ENCODE measurements at regions of chr9 and their contacts with region 1.

Region 1: DNA sequence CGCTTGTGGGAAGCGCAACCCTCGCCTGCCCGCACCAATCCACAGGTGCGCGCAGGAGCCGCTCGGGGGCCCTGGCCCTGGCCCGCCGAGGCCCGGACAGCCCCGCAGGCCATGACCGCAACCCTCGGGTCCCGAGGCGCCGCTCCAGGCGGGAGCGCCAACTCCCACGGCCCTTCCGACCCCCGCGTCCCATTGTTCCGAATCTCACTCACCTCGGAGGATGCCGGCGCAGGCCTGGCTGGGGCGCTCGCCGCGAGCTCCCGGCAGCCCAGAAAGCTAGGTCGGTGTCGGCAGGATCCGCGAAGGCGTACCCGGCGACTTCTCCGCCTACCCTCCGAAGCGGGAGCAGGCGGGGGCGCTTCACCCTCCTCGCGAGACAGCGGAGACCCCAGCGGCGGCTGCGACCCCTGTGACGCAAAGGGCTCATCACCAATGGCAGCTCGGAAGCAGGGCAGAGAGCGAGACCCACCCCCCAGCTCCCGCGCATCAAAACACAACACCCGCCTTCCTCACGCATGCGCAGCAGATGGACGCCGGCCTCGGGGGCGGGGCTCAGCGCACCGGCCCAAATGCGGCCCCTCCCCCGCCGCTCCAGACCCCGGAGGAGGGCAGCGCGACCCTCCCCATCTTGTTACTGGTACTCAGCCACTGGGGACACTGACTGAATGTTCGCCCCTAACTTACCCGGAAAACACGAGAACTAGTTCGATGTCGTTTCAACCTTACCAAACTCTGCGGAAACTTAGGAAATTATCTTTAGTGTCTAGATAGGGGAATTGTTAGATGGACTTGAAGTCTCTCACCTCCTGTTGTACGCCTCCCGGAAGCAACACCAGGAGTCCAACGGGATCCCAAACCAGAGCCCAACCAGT is 1.3 kb upstream of the SMIM27 start:
- DNase-seq: peak; percentile 45
- H3K4me3 ChIP-seq: peak overlapping the region; percentile 82
- CTCF ChIP-seq: peak; percentile 4

Region 2: GRCh38 chr9:32360983-32361673 is 189.7 kb before region 1 on chr9:
- CTCF ChIA-PET with region 1: no interaction called
- POLR2A ChIA-PET with region 1: no interaction called
- DNase-seq: no peak
- H3K4me3 ChIP-seq: no peak overlapping the region
- CTCF ChIP-seq: no peak

Region 3: DNA sequence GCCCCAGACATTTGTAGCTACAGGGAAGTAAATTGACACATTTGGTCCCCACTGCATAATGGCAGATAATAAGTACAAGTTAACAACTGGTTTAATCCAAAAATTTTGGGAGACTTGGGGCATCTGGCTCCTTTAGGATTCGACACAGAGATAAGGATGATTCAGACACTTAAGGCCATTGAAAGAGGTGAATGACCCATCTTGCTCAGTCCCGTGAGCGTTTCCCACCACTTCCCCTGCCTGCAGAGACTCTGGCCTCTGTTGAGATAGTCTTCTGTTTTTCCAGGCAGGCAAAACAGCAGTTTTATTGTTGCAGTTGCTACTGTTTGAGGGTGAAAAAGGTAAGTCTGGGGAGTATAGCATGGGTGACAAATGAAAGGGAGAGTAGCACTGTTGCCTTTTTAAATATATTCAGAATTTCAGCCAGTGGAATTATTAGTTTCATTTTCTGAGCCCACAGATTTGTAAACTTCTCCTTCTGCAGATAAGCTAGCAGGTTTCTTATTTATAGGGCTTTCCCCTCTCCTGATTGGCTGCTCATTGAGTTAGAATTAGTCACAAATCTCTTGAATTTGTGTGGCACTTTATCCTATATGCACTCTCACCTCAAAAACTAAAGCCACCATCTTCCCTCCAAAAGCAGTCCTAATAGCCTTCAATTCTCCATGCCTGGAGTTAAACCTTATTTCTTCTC is 147.1 kb before region 1 on chr9:
- CTCF ChIA-PET with region 1: no interaction called
- POLR2A ChIA-PET with region 1: no interaction called
- DNase-seq: no peak
- H3K4me3 ChIP-seq: no peak overlapping the region
- CTCF ChIP-seq: no peak

Region 4: DNA sequence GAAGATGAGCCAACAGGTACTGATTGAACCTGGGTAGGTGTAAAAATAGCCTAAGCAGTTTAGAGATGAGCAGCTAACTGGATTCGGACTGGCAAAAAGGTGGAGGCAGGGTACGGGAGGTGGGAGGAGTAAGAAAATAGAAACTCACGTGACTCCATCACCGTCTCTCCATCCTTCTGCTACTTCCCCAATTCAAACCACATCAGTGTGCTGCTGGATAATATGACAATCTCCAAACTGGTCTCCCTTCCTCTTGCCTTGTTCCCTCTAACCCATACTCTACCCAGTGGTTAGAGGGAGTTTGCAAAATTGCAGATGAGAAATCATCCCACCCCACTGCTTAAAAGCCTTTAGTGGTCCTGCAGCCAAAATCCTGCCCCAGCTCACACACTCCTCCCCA is 67.5 kb before region 1 on chr9:
- CTCF ChIA-PET with region 1: no interaction called
- POLR2A ChIA-PET with region 1: no interaction called
- DNase-seq: no peak
- H3K4me3 ChIP-seq: no peak overlapping the region
- CTCF ChIP-seq: no peak

Region 5: DNA sequence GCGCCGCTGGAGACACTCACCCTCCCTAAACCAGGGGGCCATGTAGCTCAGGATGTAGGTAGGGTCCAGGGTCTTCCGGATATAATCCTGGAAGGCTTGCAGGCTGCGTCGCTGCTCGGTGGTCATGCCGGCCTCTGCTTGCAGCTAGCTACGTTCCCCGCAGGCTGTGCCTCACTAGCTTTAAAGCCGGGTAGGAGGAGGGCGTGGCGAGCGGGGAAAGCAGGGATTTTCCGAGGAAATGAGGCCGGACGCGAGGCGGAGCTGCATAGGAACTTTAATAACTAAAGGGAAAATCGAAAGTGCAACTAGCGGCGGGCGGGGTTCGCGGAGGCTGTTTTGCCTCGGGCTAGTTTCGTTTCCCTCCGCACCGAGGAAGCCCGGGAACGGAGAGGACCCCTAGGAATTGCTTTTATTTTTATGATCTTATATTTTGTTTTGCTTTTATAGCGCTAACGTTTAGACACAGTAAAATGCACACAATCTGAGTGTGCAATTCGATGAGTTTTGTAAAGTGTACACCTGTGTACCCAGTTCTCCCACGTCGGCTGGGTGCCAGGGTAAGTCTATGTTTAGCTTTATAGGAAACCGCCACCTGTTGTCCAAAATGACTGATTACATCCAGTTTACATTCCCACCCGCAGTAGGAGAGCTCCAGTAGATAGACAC is 24.6 kb before region 1 on chr9 and contains the start of gene RIGI:
- CTCF ChIA-PET with region 1: interaction called, 10 read pairs
- POLR2A ChIA-PET with region 1: interaction called, 3 read pairs
- DNase-seq: peak; percentile 46
- H3K4me3 ChIP-seq: peak within 1 kb of the TSS; percentile 76
- CTCF ChIP-seq: peak; percentile 25

Region 6: GRCh38 chr9:32533336-32533735 is 17.5 kb before region 1 on chr9:
- CTCF ChIA-PET with region 1: interaction called, 11 read pairs
- POLR2A ChIA-PET with region 1: interaction called, 4 read pairs
- DNase-seq: no peak
- H3K4me3 ChIP-seq: no peak overlapping the region
- CTCF ChIP-seq: no peak

Region 7: GRCh38 chr9:32899181-32899580 is 348.4 kb after region 1 on chr9:
- CTCF ChIA-PET with region 1: no interaction called
- POLR2A ChIA-PET with region 1: no interaction called
- DNase-seq: no peak
- H3K4me3 ChIP-seq: no peak overlapping the region
- CTCF ChIP-seq: no peak

Measured in AG04449 (cell line).